Calu3 (cell line): ENCODE measurements at regions of chr6 and their contacts with region 1.

Region 1: DNA sequence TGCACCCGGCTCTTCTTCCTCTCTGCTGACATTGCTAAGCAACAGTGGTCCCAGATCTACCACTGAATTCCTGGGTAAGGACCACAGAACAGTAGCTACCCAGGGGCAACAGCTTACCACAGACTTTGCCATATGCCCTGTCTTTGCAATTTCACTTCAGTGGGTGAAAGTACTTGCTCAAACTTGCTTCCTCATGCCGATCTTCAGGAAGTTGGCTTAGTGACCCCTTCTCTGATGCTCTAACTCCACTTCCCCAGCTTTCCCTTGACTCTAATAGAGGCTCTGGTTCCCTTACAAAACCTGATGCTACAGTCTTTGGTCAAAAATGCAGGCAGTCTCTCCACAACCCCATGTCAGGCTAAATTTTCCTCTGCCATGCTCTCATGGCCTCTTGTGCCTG is 3.3 kb upstream of the TAAR5 start:
- DNase-seq: no peak
- H3K4me3 Mint-ChIP-seq: no peak overlapping the region
- H3K27ac Mint-ChIP-seq: no peak overlapping the region
- H3K4me1 Mint-ChIP-seq: peaks cover 11% of the 10 kb centered on the region
- H3K27me3 Mint-ChIP-seq: no peaks in the 10 kb centered on the region
- CTCF ChIP-seq: no peak

Region 2: GRCh38 chr6:132537145-132537544 is 55.7 kb before region 1 on chr6:
- CTCF ChIA-PET with region 1: no interaction called
- intact Hi-C with region 1: loop called (anchors 5 kb)
- DNase-seq: no peak
- H3K4me3 Mint-ChIP-seq: no peak overlapping the region
- H3K27ac Mint-ChIP-seq: no peak overlapping the region
- H3K4me1 Mint-ChIP-seq: peaks cover 16% of the 10 kb centered on the region
- H3K27me3 Mint-ChIP-seq: no peaks in the 10 kb centered on the region
- CTCF ChIP-seq: no peak